PC-9 (cell line): ENCODE measurements at regions of chr6 and their contacts with region 1.

Region 1: DNA sequence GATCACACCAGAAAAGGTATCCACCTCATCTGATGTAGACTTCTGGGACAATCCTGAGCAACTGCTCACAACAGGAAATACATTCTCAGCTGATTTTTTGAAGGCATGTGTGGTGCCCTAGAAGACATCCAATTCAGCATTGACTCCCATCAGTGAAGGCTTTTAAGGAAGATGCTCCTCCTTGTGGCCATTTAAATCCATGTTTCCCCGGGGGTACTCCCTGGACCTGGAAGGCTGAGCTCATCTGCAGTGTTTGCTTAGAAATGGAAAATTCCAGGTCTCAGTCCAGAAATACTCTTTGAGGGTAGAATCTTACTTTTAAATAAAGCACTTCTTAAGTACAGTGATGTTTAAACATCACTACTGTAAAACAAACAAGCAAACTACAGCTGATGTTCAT is 195.5 kb upstream of the PDE10A start:
- DNase-seq: no peak
- H3K4me3 ChIP-seq: no peak overlapping the region
- H3K27ac ChIP-seq: no peak overlapping the region
- H3K4me1 ChIP-seq: no peaks in the 10 kb centered on the region
- H3K27me3 ChIP-seq: peaks cover 68% of the 10 kb centered on the region
- CTCF ChIP-seq: no peak

Region 2: GRCh38 chr6:165826487-165827189 is 31.9 kb before region 1 on chr6:
- CTCF ChIA-PET with region 1: no interaction called
- POLR2A ChIA-PET with region 1: interaction called, 14 read pairs
- intact Hi-C with region 1: no loop called
- DNase-seq: no peak
- H3K4me3 ChIP-seq: no peak overlapping the region
- H3K27ac ChIP-seq: no peak overlapping the region
- H3K4me1 ChIP-seq: no peaks in the 10 kb centered on the region
- H3K27me3 ChIP-seq: peaks cover 73% of the 10 kb centered on the region
- CTCF ChIP-seq: no peak

Region 3: DNA sequence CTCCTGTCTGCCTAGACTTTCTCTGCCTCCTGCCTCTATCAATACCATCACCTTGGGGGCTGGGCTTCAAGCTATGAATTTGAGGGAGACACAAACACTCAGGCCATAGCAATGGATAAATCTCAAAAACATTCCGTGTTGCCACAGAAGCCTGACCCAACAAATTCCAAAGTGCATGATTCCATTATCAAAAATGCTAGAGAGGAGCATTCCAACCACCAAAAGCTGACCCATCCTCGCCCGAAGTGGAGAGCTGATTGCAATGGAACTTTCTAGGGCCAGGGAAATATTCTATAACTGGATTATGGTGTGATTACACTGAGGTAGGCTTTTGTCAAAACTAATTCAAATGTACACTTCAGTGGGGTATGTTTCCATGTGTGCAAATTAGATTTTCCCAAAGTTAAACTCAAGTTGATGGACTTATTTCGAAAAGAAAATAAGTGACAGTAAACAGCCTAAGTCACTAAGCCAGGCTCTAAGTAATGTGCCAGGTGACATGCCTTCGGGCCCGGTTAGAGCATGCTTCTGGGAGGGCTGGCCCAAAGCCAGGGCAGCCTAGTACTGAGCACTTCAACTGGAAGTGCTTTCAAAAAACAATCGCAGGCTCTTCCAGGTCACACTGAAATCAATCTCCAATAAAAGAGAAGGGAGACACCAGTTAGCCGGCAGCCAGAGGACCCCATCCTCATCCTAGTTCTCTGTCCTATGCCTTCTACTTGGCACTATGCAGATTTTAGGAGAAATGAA is 166.7 kb after region 1 on chr6:
- CTCF ChIA-PET with region 1: no interaction called
- POLR2A ChIA-PET with region 1: no interaction called
- intact Hi-C with region 1: no loop called
- DNase-seq: no peak
- H3K4me3 ChIP-seq: no peak overlapping the region
- H3K27ac ChIP-seq: no peak overlapping the region
- H3K4me1 ChIP-seq: no peaks in the 10 kb centered on the region
- H3K27me3 ChIP-seq: 0 out of 2 replicates have a peak, but pooled peaks cover 3% of the 10 kb centered on the region
- CTCF ChIP-seq: no peak